Activated T-helper 2 cell treated with anti-CD3 and anti-CD28 coated beads, Interferon-gamma antibody, Interleukin-2, Interleukin-4, amounts not matched to agents 10 μg/mL and 5 μg/mL and 100 μg/mL, durations not matched to agents 14 hours and 24 hours and 36 hours (primary cell): ENCODE measurements at regions of chr6 and their contacts with region 1.

Region 1: DNA sequence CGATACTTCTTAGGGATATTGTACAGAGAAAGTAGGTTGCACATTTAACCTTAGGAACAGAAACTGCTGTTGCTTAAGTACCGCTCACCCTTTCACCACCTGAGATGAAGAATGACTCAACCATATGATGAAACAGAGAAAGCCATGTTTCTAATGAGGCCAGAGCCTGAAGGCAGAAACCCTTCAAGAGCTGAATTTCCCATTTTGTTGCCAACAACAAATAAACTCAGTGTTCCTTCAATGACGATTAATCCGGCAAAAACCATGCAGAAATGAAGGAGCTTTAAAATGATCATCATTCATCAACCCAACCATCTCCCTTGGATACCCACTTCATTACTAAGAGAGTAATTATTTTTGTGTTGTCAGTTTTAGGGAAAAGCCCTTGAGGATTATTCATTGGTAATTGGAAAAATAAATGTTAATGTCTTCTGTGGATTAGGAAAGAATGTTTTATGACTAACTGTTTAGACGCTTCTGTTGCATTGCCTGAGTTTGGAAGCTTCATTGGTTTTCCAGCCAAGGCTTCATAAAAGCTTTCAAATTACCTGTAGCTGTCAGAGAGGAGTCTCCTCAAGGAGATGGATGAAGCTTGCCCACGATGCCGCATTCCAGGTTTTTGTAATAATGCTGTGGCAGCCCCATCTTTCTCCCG is 112.1 kb upstream of the IYD start:
- DNase-seq: no peak
- H3K4me3 Mint-ChIP-seq: no peak overlapping the region
- H3K27ac Mint-ChIP-seq: no peak overlapping the region
- H3K4me1 Mint-ChIP-seq: peaks cover 48% of the 10 kb centered on the region
- H3K27me3 Mint-ChIP-seq: peaks cover 2% of the 10 kb centered on the region

Region 2: DNA sequence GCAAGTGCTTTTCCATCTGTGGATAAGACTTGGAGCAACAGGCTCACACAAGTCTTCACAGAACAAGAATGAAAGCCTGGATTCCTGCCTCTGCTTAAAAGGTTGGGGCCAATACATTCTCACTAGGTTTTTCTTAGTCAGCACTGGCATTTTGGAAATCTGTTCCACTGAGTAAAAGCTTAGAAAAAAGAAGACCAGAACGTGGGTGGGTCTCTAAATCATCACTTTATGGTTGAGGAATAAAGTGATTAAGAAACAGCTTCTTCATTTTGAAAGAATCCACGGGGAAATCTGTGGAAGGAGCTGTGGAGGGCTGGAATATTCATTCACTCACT is 103.2 kb before region 1 on chr6:
- intact Hi-C with region 1: loop called (anchors 5 kb)
- DNase-seq: no peak
- H3K4me3 Mint-ChIP-seq: no peak overlapping the region
- H3K27ac Mint-ChIP-seq: no peak overlapping the region
- H3K4me1 Mint-ChIP-seq: peaks cover 27% of the 10 kb centered on the region
- H3K27me3 Mint-ChIP-seq: peaks cover 59% of the 10 kb centered on the region

Region 3: DNA sequence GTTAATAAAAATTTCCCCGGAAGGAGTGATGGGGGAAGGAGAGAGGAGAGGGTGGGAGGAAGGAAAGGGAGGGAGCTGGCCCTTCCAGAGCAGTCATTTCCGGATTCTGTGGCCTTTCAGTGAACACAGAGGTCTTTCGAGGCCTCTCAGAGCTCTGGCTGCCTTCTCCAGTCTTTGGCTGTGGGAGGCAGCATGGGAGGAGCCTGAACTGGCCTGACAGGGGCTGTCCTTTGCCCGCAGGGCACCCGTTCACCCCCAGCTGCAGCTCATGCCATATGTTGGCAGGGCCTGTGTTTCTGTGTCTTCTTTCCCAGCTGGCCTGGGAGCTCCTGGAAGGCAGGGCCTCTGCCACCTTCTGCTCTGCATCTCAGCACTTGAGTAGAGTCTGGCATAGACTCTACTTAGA is 18.4 kb before region 1 on chr6:
- intact Hi-C with region 1: loop called (anchors 1 kb)
- DNase-seq: no peak
- H3K4me3 Mint-ChIP-seq: no peak overlapping the region
- H3K27ac Mint-ChIP-seq: peak overlapping the region; percentile 3
- H3K4me1 Mint-ChIP-seq: peaks cover 47% of the 10 kb centered on the region
- H3K27me3 Mint-ChIP-seq: peaks cover 6% of the 10 kb centered on the region

Region 4: GRCh38 chr6:150273457-150274309 is 16.9 kb after region 1 on chr6:
- intact Hi-C with region 1: no loop called
- DNase-seq: no peak
- H3K4me3 Mint-ChIP-seq: no peak overlapping the region
- H3K27ac Mint-ChIP-seq: no peak overlapping the region
- H3K4me1 Mint-ChIP-seq: peaks cover 3% of the 10 kb centered on the region
- H3K27me3 Mint-ChIP-seq: peaks cover 19% of the 10 kb centered on the region

Region 5: DNA sequence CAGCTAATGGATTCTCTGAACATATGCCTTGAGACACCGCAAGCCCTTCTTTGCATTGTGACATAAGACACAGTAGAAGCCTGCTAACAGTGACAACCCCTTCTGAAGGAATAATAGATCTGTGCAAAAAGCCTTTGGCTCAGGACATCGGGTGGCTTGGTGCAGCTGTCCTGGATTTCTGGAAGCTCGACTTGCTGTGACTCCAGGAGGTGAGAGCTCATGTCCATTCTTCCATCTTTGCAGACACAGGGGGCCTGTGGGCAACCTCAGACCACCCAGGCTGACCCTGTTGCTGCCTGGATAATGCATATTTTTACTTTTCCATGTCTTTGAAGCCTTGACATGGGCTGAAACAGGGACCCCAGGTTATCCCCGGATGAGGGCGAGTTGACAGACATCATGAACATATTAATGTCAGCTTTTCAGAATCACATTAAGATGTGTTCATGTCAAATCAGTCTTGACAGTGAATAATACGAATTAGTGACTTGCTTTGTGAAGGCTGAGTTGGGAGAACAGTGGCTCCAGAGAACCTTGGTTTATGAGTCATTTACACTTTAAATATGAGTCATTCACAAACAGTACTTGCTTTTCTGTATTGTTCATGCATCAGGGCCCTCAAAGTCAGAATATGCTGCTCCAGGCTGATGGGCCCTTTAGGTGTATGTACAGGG is 45.2 kb after region 1 on chr6:
- intact Hi-C with region 1: loop called (anchors 5 kb)
- DNase-seq: no peak
- H3K4me3 Mint-ChIP-seq: no peak overlapping the region
- H3K27ac Mint-ChIP-seq: no peak overlapping the region
- H3K4me1 Mint-ChIP-seq: peaks cover 10% of the 10 kb centered on the region
- H3K27me3 Mint-ChIP-seq: peaks cover 5% of the 10 kb centered on the region